ENCODE measurements at regions of chr3 and their contacts with region 1.

Region 1: DNA sequence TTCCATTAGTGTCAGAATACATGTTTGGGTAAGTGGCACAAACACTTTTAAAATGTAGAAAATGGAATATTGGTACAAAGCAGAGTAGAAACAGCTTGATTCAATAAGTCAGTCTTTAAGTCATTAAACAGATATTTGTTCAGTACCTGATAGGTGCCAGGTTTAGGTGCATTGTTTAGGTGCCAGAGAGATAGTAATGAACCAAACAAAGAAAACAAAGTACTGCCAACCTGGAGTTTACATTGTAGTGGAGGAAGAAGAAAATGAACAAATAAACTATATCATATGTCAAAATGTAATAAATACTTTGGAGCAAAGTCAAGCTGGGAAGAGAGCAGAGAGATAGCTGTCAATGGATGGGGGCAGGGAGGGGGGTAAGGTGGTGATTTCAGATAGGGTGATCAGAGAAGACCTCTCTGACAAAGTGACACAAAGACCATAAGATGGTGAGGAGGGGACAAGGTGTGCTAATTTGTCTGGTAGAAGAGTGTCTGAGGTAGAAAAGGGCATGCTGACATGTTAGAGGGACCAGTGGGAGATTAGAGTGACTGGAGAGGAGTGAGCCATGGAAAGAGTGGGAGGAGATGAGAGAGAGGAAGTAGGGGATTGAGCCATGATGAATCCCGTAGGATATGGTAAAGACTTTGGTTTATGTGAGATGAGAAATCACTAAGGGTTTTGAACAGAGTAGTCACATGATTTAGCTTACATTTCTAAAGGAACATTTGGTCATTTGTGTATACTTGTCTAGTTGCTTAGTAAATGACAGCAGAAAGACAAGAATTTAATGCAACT is 128.2 kb downstream of the UBE2E2 start:
- DNase-seq: no peak
- H3K4me3 ChIP-seq: no peak overlapping the region
- H3K27me3 ChIP-seq: no peaks in the 10 kb centered on the region
- CTCF ChIP-seq: no peak

Region 2: GRCh38 chr3:23319366-23320312 is 11.7 kb before region 1 on chr3:
- CTCF ChIA-PET with region 1: no interaction called
- POLR2A ChIA-PET with region 1: interaction called, 18 read pairs
- DNase-seq: no peak
- H3K4me3 ChIP-seq: no peak overlapping the region
- H3K27me3 ChIP-seq: no peaks in the 10 kb centered on the region
- CTCF ChIP-seq: no peak